A673 (cell line): ENCODE measurements at regions of chr5 and their contacts with region 1.

Region 1: DNA sequence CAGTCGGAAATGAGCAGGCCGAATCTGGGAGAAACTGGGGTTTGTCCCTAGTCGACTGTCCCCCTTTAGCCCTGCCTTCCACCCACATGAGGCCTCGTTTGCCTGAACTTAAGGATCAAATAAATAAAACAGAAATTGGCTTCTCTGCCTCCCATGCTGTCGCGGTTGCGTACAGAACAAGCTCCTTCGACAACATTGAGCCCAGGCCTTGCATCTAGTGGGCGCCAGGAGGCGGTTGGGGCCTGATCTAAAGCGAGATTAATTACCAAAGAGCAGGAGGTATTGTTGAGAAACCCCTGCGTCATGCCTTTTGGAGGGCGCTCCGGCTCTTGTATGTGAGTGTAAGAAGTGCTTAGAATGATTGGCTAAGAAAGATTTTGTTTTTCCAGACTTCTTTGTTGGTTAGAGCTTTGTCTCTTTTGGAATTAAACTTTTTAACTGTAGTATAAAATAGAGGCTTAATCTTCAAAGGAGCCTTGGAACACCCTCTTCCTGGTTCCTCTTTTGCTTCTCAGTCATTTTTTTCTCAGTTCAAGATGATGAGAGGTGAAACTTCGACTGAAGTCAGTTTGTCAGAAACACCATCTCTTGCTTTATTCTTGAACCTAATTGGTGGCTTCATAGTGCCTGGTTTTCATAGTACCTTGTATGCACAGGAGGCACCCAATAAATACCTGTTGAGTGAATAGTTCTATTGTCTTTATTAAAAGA is 827 bp downstream of the ATP6V0E1 start:
- DNase-seq: peak; percentile 83
- H3K4me3 ChIP-seq: peak overlapping the region; percentile 91
- H3K27ac ChIP-seq: peak overlapping the region; percentile 81
- H3K4me1 ChIP-seq: no peaks in the 10 kb centered on the region
- H3K27me3 ChIP-seq: no peaks in the 10 kb centered on the region
- CTCF ChIP-seq: peak; percentile 49

Region 2: DNA sequence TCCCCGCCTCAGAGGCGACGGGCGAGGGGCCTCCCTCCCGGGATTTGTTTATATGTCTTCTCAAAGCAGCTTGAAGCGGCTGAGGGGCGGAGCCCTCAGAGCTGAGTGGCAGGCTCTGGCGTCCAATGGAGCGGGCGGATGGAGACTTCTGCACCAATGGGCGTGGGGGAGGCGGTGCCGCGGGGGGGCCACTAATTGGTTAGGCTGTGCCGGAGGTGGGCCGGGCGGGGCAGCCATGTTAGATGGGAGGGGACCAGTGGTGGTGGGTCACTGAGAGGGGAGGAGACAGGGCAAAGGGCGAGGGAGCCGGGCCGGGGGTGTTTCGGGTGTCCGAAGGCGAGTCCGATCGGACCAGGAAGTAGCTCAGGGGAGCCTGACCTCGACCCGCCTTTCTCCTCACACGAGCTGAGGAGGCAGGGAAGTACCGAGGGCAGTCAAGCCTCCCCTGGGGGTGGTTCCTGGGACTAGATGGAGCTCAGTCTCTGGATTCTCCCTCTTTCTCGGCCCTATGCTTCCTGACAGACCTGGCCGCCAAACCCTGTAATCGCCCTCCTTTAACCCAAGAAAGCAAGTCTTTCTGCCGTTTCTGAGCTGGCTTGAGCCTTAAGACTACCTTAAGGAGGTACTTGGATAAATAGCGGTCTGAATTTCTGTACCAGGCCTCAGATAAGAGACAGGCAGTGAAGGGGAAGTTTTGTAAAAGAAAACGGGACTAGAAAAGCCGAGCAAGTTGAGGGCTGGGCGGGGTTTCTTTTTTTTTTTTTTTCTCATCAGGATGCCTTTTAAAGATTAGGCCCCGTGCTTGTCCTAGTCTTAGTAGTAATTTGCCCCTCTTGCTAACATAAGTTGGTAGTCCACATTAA is 72.9 kb after region 1 on chr5:
- CTCF ChIA-PET with region 1: interaction called, 4 read pairs
- POLR2A ChIA-PET with region 1: no interaction called
- intact Hi-C with region 1: loop called (anchors 5 kb)
- DNase-seq: peak; percentile 97
- H3K4me3 ChIP-seq: peak overlapping the region; percentile 90
- H3K27ac ChIP-seq: peak overlapping the region; percentile 65
- H3K4me1 ChIP-seq: peaks cover 9% of the 10 kb centered on the region
- H3K27me3 ChIP-seq: no peaks in the 10 kb centered on the region
- CTCF ChIP-seq: no peak

Region 3: GRCh38 chr5:173144200-173145176 is 160.1 kb after region 1 on chr5 and contains the start of gene BNIP1:
- CTCF ChIA-PET with region 1: interaction called, 5 read pairs
- POLR2A ChIA-PET with region 1: no interaction called
- intact Hi-C with region 1: loop called (anchors 10 kb)
- DNase-seq: peak; percentile 93
- H3K4me3 ChIP-seq: peak within 1 kb of the TSS; percentile 96
- H3K27ac ChIP-seq: peak within 1 kb of the TSS; percentile 91
- H3K4me1 ChIP-seq: no peaks in the 10 kb centered on the region
- H3K27me3 ChIP-seq: no peaks in the 10 kb centered on the region
- CTCF ChIP-seq: peak; percentile 85
- total RNA-seq, gene BNIP1: 14.7 and 15.5 TPM in 2 replicates

Region 4: DNA sequence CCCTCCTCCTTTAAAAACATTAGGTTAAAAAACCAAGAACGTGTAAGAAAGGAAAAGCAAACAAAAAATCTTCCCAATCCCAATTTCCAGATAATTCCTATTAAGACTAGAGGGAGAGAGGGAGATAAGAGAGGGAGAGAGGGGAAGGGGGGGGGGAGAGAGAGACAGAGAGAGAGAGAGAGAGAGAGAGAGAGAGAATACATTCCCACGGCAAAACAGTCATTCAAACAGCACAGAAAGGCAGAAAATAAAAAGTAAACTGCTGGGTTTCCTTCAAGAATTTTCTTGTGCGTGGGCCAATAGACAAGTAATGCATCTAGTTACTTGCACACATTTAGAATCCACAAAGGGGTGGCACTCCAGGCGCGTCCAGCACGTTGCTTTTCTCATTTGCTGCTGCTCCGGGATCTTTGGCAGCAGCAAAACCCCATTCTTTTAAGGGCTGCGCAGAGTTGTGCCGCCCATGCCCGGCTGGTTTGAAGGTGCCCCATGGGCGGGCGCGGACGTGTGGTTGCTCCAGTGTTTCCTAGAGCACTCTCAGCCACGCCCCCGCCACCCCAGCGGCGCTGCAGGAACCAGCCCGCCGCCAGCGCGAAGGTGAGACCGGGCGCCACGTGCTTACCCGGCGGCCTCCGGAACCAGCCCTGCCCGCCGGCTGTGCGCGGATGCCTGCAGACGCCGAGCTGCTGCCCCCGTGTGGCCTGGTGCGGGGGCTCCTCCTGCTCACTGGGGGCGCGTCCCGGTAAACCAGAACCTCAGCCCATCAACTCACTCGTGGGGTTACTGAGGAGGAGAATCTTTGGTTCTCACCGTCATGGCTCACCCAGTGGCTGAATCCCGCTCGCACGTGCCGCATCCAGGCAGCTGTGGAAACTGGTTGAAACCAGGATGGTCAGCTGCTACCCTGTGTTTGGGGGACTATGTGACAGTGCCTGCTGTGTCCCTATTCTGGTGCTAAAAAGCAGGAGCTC is 299.2 kb after region 1 on chr5:
- CTCF ChIA-PET with region 1: no interaction called
- POLR2A ChIA-PET with region 1: no interaction called
- intact Hi-C with region 1: loop called (anchors 2 kb)
- DNase-seq: peak; percentile 80
- H3K4me3 ChIP-seq: peak overlapping the region; percentile 17
- H3K27ac ChIP-seq: no peak overlapping the region
- H3K4me1 ChIP-seq: no peaks in the 10 kb centered on the region
- H3K27me3 ChIP-seq: no peaks in the 10 kb centered on the region
- CTCF ChIP-seq: peak; percentile 75

Region 5: GRCh38 chr5:173331956-173332479 is 347.6 kb after region 1 on chr5:
- CTCF ChIA-PET with region 1: interaction called, 3 read pairs
- POLR2A ChIA-PET with region 1: no interaction called
- intact Hi-C with region 1: loop called (anchors 5 kb)
- DNase-seq: peak; percentile 85
- H3K4me3 ChIP-seq: no peak overlapping the region
- H3K27ac ChIP-seq: no peak overlapping the region
- H3K4me1 ChIP-seq: peaks cover 14% of the 10 kb centered on the region
- H3K27me3 ChIP-seq: no peaks in the 10 kb centered on the region
- CTCF ChIP-seq: peak; percentile 88